ENCODE measurements at regions of chr6 and their contacts with region 1.

Region 1: DNA sequence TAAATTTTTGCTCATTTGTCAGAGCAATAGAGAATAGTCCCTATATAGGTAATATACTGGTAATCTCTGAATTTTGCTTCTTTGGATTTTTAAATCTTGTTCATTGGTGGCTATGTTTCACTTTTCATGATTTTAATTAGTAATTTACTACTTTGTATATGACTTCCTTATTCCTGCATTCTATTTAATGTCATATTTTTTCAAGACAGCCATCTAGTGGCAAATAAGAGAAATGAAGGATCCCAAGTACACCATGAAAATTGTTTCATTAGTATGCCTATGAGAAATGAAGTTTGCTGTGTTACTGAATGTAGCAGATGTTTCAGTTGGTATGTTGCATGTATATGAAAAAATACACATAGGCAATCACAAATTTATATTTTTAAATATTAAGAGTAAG is 82.4 kb downstream of the ZNF292 start:
- DNase-seq: no peak
- H3K4me3 ChIP-seq: no peak overlapping the region
- H3K27ac ChIP-seq: no peak overlapping the region
- H3K4me1 ChIP-seq: no peaks in the 10 kb centered on the region
- H3K27me3 ChIP-seq: no peaks in the 10 kb centered on the region
- CTCF ChIP-seq: peak; percentile 21 to 58 (median 49)

Region 2: DNA sequence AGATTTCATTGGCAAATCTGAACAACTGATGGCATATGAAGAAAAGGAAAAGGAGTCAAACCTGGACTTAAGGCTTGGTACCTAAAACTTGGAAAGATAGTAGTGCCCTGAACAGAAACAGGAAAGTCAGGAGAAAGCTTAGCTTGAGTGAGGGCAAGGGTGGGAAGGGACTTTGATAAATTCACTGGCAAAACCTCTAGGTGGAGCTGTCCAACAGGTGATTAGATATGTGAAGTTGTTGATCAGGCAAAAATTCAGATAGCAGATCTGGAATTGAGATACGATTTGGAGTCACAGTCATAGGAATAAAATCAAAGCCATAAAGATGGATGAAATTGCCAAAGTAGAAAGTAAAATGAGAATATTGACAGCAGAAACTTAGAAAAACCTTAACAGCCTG is 98.6 kb before region 1 on chr6:
- intact Hi-C with region 1: loop called (anchors 1 kb)
- DNase-seq: no peak
- H3K4me3 ChIP-seq: no peak overlapping the region
- H3K27ac ChIP-seq: no peak overlapping the region
- H3K4me1 ChIP-seq: no peaks in the 10 kb centered on the region
- H3K27me3 ChIP-seq: no peaks in the 10 kb centered on the region
- CTCF ChIP-seq: peak; percentile 48 to 63 (median 60)

Region 3: GRCh38 chr6:87164004-87164403 is 73.8 kb before region 1 on chr6:
- intact Hi-C with region 1: no loop called
- DNase-seq: no peak
- H3K4me3 ChIP-seq: no peak overlapping the region
- H3K27ac ChIP-seq: no peak overlapping the region
- H3K4me1 ChIP-seq: peaks cover 0 to 7% of the 10 kb centered on the region in 2 donors
- H3K27me3 ChIP-seq: no peaks in the 10 kb centered on the region
- CTCF ChIP-seq: no peak

Region 4: GRCh38 chr6:87210979-87211378 is 26.8 kb before region 1 on chr6:
- intact Hi-C with region 1: no loop called
- DNase-seq: no peak
- H3K4me3 ChIP-seq: no peak overlapping the region
- H3K27ac ChIP-seq: no peak overlapping the region
- H3K4me1 ChIP-seq: no peaks in the 10 kb centered on the region
- H3K27me3 ChIP-seq: no peaks in the 10 kb centered on the region
- CTCF ChIP-seq: no peak

Region 5: GRCh38 chr6:87472525-87473418 is 235.0 kb after region 1 on chr6 and contains the start of gene SLC35A1:
- intact Hi-C with region 1: no loop called
- DNase-seq: peak; percentile 30 to 92
- H3K4me3 ChIP-seq: peak within 1 kb of the TSS; percentile 85 to 96
- H3K27ac ChIP-seq: peak within 1 kb of the TSS; percentile 82 to 93
- H3K4me1 ChIP-seq: peaks cover 0 to 3% of the 10 kb centered on the region in 2 donors
- H3K27me3 ChIP-seq: no peaks in the 10 kb centered on the region
- CTCF ChIP-seq: peak in 1 of 3 experiments; percentile 15
- total RNA-seq, gene SLC35A1: 7.9 TPM

Measured in ascending aorta (tissue), 2 donors.